Activated CD4-positive, alpha-beta T cell treated with anti-CD3 and anti-CD28 coated beads for 36 hours (primary cell): ENCODE measurements at regions of chr18 and their contacts with region 1.

Region 1: GRCh38 chr18:35497370-35498197 is at the start of gene INO80C:
- DNase-seq: peak; percentile 96
- ATAC-seq: peak; percentile 95
- H3K4me3 Mint-ChIP-seq: peak within 1 kb of the TSS; percentile 85
- H3K27ac Mint-ChIP-seq: peak within 1 kb of the TSS; percentile 97
- H3K4me1 Mint-ChIP-seq: peaks cover 33% of the 10 kb centered on the region
- H3K27me3 Mint-ChIP-seq: no peaks in the 10 kb centered on the region
- total RNA-seq, gene INO80C: 30.8 to 37.4 TPM

Region 2: GRCh38 chr18:35040988-35041814 is 456.4 kb before region 1 on chr18 and contains the start of gene MAPRE2:
- CTCF ChIA-PET with region 1: no interaction called
- POLR2A ChIA-PET with region 1: no interaction called
- intact Hi-C with region 1: loop called in 1 of 2 experiments (anchors 1 kb)
- DNase-seq: peak; percentile 100
- ATAC-seq: peak; percentile 76
- H3K4me3 Mint-ChIP-seq: peak within 1 kb of the TSS; percentile 97
- H3K27ac Mint-ChIP-seq: peak within 1 kb of the TSS; percentile 98
- H3K4me1 Mint-ChIP-seq: peaks cover 57% of the 10 kb centered on the region
- H3K27me3 Mint-ChIP-seq: no peaks in the 10 kb centered on the region
- total RNA-seq, gene MAPRE2: 59.4 to 83.8 TPM

Region 3: DNA sequence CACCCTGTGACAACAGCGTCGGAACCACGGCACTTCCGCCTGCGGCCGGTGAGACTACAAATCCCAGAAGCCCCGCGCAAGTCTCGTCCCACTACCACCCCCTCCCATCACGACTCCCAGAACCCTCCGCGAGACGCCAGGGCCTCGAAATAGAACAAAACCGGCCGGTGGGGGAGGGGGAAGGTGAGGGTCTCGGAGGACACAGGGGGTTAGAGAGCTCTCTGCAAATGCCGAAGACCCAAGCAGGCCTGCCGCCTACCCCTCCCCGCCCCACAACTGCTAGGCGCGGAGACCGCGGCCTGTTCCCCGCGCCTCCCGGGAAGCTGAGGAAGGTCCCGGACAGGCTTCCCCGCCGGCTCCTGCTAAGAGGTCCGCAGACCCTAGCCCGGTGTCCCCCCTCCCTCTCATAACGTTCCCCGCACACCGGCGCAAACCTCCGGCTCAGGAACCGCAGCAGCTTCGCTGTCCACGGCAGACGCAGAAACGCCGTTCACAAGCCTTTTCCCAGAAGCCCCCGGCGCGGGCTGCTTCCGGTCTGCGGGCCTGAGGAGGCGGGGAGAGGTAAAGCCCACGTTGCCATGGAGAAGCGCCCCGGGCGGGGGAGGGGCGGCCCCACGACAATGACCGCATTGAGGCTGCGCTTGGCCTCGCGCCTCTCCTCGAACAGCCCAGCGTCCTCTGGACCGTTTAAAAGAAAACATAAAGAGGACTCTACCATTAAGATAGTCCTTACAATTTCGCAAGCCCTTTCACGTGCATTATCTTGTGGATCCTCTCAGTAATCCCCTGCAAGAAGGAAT is 153.4 kb before region 1 on chr18 and contains the start of gene ZNF24:
- CTCF ChIA-PET with region 1: no interaction called
- POLR2A ChIA-PET with region 1: no interaction called
- intact Hi-C with region 1: loop called in 1 of 2 experiments (anchors 1 kb)
- DNase-seq: peak; percentile 96
- ATAC-seq: peak; percentile 93
- H3K4me3 Mint-ChIP-seq: peak within 1 kb of the TSS; percentile 86
- H3K27ac Mint-ChIP-seq: peak within 1 kb of the TSS; percentile 94
- H3K4me1 Mint-ChIP-seq: peaks cover 38% of the 10 kb centered on the region
- H3K27me3 Mint-ChIP-seq: no peaks in the 10 kb centered on the region
- total RNA-seq, gene ZNF24: 31.7 to 50.9 TPM

Region 4: GRCh38 chr18:35441857-35442595 is 55.6 kb before region 1 on chr18:
- CTCF ChIA-PET with region 1: no interaction called
- POLR2A ChIA-PET with region 1: no interaction called
- intact Hi-C with region 1: no loop called
- DNase-seq: no peak
- ATAC-seq: no peak
- H3K4me3 Mint-ChIP-seq: no peak overlapping the region
- H3K27ac Mint-ChIP-seq: no peak overlapping the region
- H3K4me1 Mint-ChIP-seq: no peaks in the 10 kb centered on the region
- H3K27me3 Mint-ChIP-seq: no peaks in the 10 kb centered on the region

Region 5: GRCh38 chr18:35478520-35479435 is 18.8 kb before region 1 on chr18:
- CTCF ChIA-PET with region 1: interaction called, 6 read pairs
- POLR2A ChIA-PET with region 1: interaction called, 27 read pairs
- intact Hi-C with region 1: loop called (anchors 1 kb)
- DNase-seq: peak; percentile 65
- ATAC-seq: peak; percentile 100
- H3K4me3 Mint-ChIP-seq: peak overlapping the region; percentile 22
- H3K27ac Mint-ChIP-seq: peak overlapping the region; percentile 55
- H3K4me1 Mint-ChIP-seq: peaks cover 40% of the 10 kb centered on the region
- H3K27me3 Mint-ChIP-seq: no peaks in the 10 kb centered on the region

Region 6: GRCh38 chr18:35972197-35973052 is 474.8 kb after region 1 on chr18 and contains the start of gene RMP24:
- CTCF ChIA-PET with region 1: no interaction called
- POLR2A ChIA-PET with region 1: no interaction called
- intact Hi-C with region 1: loop called (anchors 1 kb)
- DNase-seq: peak; percentile 97
- ATAC-seq: peak; percentile 87
- H3K4me3 Mint-ChIP-seq: peak within 1 kb of the TSS; percentile 99
- H3K27ac Mint-ChIP-seq: peak within 1 kb of the TSS; percentile 96
- H3K4me1 Mint-ChIP-seq: peaks cover 49% of the 10 kb centered on the region
- H3K27me3 Mint-ChIP-seq: no peaks in the 10 kb centered on the region

Region 7: GRCh38 chr18:35983818-35984217 is 486.2 kb after region 1 on chr18:
- CTCF ChIA-PET with region 1: no interaction called
- POLR2A ChIA-PET with region 1: no interaction called
- intact Hi-C with region 1: no loop called
- DNase-seq: no peak
- ATAC-seq: no peak
- H3K4me3 Mint-ChIP-seq: no peak overlapping the region
- H3K27ac Mint-ChIP-seq: no peak overlapping the region
- H3K4me1 Mint-ChIP-seq: no peaks in the 10 kb centered on the region
- H3K27me3 Mint-ChIP-seq: no peaks in the 10 kb centered on the region

Region 8: DNA sequence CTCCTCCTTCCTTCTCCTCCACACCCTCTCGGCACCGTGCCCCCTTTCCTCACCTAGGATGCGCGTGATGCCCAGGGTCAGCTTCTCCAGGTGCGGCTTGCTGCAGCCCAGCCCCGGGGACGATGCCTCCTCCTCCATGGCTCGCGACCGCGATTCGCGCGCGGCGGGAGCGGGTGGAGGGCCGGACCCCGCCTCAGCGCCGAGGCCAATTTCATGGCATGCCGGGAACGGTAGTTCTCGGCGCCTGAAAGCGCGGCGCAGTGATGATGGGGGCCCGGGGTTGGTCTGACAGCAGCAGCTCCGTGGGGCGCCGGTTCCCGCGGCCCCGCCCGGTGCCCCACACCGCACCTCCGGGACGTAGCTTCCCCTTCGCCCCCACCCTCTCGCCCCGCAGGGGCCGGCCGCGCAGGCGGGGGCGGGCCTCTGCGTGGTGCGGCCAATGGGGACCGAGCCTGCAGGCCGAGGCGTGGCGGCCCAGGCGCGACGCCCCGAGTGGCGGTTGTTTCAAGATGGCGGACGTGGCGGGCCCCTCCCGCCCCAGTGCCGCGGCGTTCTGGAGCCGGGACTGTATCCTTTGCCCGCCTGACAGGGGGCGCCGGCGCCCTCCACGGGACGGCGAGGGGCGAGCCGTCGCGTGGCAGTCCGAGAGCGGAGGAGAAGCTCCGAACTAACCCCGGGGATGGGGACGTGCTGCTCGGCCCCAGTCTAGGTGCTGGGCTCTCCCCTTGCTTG is 1331.2 kb after region 1 on chr18 and contains the starts of genes KIAA1328 and TPGS2:
- CTCF ChIA-PET with region 1: no interaction called
- POLR2A ChIA-PET with region 1: no interaction called
- intact Hi-C with region 1: loop called in 1 of 2 experiments (anchors 5 kb)
- DNase-seq: peak; percentile 92
- ATAC-seq: peak; percentile 92
- H3K4me3 Mint-ChIP-seq: peak within 1 kb of the TSS; percentile 77
- H3K27ac Mint-ChIP-seq: peak within 1 kb of the TSS; percentile 95
- H3K4me1 Mint-ChIP-seq: peaks cover 35% of the 10 kb centered on the region
- H3K27me3 Mint-ChIP-seq: no peaks in the 10 kb centered on the region
- total RNA-seq, gene KIAA1328: 5.8 to 7.4 TPM
- total RNA-seq, gene TPGS2: 87.6 to 158 TPM